ENCODE measurements at regions of chr6 and their contacts with region 1.

Region 1: DNA sequence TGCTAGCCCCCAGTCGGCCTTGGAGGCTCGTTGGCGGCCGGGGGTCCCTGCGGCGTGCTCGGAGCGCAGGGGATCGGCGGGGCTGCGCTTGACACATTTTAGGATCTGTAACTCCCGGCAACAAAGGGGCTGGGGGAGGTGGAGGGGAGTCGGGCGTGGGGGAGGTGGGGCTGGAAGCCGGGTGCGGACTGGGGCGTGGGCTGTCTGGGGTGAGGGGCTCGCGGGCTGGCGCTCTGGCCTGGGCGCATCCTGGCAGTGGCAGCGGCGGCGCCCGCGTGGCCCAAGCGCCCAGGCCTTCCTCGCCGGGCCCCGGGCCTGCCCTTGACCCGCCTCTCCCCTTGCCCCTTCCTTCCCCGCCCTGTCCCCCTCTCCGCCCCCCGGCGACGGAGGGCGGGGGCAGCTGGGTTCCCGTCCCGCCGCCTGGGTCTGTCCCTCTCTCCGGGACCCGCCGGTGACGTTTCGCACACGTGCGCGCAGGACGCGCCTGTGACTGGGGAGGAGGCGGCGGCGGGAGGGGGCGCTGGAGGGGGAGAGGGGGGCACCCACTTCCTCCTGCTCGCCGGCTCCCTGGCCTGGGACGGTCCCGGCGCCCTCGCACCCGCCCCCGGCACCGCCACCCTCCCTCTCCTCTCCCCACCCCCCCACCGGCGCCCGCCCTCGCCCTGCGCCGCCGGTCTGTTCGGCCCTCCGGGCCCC is 1.5 kb downstream of the E2F3 start:
- DNase-seq: peak; percentile 64 to 89
- H3K4me3 ChIP-seq: peak overlapping the region; percentile 62 to 88 (median 86)
- H3K27ac ChIP-seq: peak overlapping the region; percentile 93
- H3K4me1 ChIP-seq: peaks cover 0 to 5% (median 2%) of the 10 kb centered on the region in 4 experiments; a peak in 3 of 7 replicates
- H3K27me3 ChIP-seq: no peaks in the 10 kb centered on the region; a peak in 1 of 7 replicates
- CTCF ChIP-seq: no peak
- EP300 ChIP-seq: 0 out of 3 replicates have a peak, but pooled peaks of 1 of the 2 experiments have one; percentile 8
- POLR2A ChIP-seq: peak in 1 of 2 experiments; percentile 29; a peak in 1 of 3 replicates
- RAD21 ChIP-seq: no peak

Region 2: DNA sequence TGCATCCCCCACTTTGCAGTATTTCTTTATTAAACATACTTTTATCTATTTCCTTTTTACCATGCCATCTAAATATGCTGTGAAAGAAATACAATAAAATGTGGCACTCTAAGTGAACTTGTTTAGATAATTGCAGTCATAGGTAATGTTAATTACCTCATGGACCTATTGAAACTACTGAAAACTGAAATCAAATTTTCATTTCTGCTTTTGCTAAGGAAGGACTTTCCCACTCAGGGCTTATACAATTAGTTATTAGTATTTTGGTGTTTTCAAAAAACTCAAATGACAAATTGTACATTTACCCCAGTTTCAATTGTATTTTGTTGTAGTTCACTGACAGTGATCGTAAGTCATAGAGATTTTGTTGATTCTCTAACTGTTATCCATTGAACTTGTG is 477.7 kb before region 1 on chr6:
- CTCF ChIA-PET with region 1: no interaction called
- POLR2A ChIA-PET with region 1: no interaction called
- DNase-seq: no peak
- H3K4me3 ChIP-seq: no peak overlapping the region
- H3K27ac ChIP-seq: no peak overlapping the region
- H3K4me1 ChIP-seq: no peaks in the 10 kb centered on the region; a peak in 1 of 7 replicates
- H3K27me3 ChIP-seq: no peaks in the 10 kb centered on the region
- CTCF ChIP-seq: no peak
- EP300 ChIP-seq: no peak
- POLR2A ChIP-seq: no peak
- RAD21 ChIP-seq: no peak

Region 3: DNA sequence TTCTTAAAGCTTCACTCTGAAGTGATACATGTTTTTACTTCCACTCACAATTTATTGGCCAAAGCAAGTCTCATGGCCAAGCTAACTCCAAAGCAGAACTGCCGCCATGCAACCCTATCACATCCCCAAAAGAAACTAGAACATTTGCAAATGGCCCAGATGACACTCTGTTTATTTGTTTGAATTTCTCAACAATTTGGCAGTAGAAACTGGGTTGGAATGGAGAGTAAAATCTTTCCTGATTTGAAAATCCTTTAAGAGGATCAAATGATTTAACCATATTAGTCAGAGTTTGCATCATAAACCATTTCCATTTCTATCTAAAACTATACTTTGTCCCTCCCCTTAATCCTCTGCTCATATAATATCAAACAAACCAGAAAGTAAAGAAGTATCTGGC is 40.6 kb before region 1 on chr6:
- CTCF ChIA-PET with region 1: no interaction called
- POLR2A ChIA-PET with region 1: no interaction called
- DNase-seq: no peak
- H3K4me3 ChIP-seq: no peak overlapping the region
- H3K27ac ChIP-seq: no peak overlapping the region
- H3K4me1 ChIP-seq: no peaks in the 10 kb centered on the region
- H3K27me3 ChIP-seq: no peaks in the 10 kb centered on the region; a peak in 1 of 7 replicates
- CTCF ChIP-seq: no peak
- EP300 ChIP-seq: no peak
- POLR2A ChIP-seq: no peak
- RAD21 ChIP-seq: no peak

Region 4: GRCh38 chr6:20377623-20378265 is 25.5 kb before region 1 on chr6:
- CTCF ChIA-PET with region 1: interaction called, 9 read pairs
- POLR2A ChIA-PET with region 1: interaction called, 15 read pairs
- DNase-seq: no peak
- H3K4me3 ChIP-seq: no peak overlapping the region
- H3K27ac ChIP-seq: no peak overlapping the region
- H3K4me1 ChIP-seq: peaks cover 0 to 3% (median 0%) of the 10 kb centered on the region in 4 experiments; a peak in 1 of 7 replicates
- H3K27me3 ChIP-seq: peaks cover 0 to 2% (median 0%) of the 10 kb centered on the region in 4 experiments; a peak in 1 of 7 replicates
- CTCF ChIP-seq: no peak
- EP300 ChIP-seq: no peak
- POLR2A ChIP-seq: no peak
- RAD21 ChIP-seq: no peak

Region 5: GRCh38 chr6:20415712-20416454 is 12.7 kb after region 1 on chr6:
- CTCF ChIA-PET with region 1: interaction called, 8 read pairs
- POLR2A ChIA-PET with region 1: interaction called, 39 read pairs
- DNase-seq: peak in 1 of 2 experiments; percentile 37
- H3K4me3 ChIP-seq: no peak overlapping the region
- H3K27ac ChIP-seq: no peak overlapping the region
- H3K4me1 ChIP-seq: peaks cover 1 to 29% (median 4%) of the 10 kb centered on the region in 4 experiments; a peak in 6 of 7 replicates
- H3K27me3 ChIP-seq: no peaks in the 10 kb centered on the region
- CTCF ChIP-seq: no peak
- EP300 ChIP-seq: no peak
- POLR2A ChIP-seq: no peak
- RAD21 ChIP-seq: no peak

Region 6: DNA sequence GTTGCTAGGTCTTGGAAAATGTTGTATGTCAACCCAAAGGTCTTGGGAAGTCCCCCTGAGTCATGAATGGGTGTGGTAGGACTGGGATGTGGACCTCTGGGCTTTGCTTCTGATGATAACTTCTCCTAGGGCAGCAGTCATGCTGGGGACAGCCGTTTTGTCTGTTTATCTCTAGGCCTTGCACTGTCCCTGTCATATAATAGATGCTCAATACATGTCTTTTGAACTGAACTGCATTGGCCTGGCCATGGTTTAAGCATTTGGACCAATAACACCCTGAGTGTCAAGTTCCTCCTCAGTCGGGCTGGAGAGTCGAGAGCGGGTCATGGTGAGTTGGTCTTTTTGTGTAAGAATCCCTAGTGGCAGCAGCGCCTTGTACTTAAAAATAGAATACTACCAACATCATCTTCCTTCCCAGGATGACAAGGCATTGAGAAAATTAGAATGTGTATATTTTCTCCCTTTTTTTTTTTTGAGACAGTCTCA is 41.6 kb after region 1 on chr6:
- CTCF ChIA-PET with region 1: interaction called, 4 read pairs
- POLR2A ChIA-PET with region 1: interaction called, 10 read pairs
- DNase-seq: no peak
- H3K4me3 ChIP-seq: no peak overlapping the region
- H3K27ac ChIP-seq: no peak overlapping the region
- H3K4me1 ChIP-seq: peaks cover 0 to 9% (median 5%) of the 10 kb centered on the region in 4 experiments; a peak in 5 of 7 replicates
- H3K27me3 ChIP-seq: no peaks in the 10 kb centered on the region
- CTCF ChIP-seq: no peak
- EP300 ChIP-seq: no peak
- POLR2A ChIP-seq: no peak
- RAD21 ChIP-seq: no peak

Region 7: GRCh38 chr6:20467437-20467836 is 64.2 kb after region 1 on chr6:
- CTCF ChIA-PET with region 1: interaction called, 4 read pairs
- POLR2A ChIA-PET with region 1: interaction called, 27 read pairs
- DNase-seq: no peak
- H3K4me3 ChIP-seq: peak overlapping the region in 1 of 4 experiments; percentile 11; a peak in 1 of 8 replicates
- H3K27ac ChIP-seq: no peak overlapping the region
- H3K4me1 ChIP-seq: peaks cover 3 to 24% (median 17%) of the 10 kb centered on the region in 4 experiments; a peak in 5 of 7 replicates
- H3K27me3 ChIP-seq: no peaks in the 10 kb centered on the region
- CTCF ChIP-seq: no peak
- EP300 ChIP-seq: no peak
- POLR2A ChIP-seq: no peak
- RAD21 ChIP-seq: no peak

Region 8: DNA sequence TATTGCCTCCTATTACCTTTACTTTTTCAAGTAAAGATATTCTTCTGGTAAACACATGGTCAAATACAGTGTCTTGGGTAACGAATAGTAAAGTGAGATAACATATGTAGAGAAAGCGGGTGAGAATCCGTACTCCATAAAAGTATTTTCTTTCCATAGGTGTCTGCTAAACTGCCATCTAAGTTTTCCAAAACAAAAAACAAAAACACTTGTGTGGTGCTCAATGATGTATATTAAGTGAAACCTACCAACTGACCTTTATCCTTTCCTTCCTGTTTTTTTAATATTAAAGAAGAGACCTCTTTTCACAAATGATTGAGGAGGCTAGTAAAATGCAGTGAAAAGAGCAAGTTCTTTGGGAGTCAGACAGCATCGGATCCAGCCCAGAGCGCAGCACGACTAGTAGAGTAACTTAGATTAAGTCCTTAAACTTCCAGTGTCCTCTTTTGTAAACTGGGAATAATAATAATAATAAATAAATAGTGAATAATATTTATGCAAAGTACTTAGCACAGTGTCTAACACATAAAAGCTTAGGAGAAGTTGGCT is 130.6 kb after region 1 on chr6:
- CTCF ChIA-PET with region 1: interaction called, 13 read pairs
- POLR2A ChIA-PET with region 1: interaction called, 6 read pairs
- DNase-seq: peak in 1 of 2 experiments; percentile 22
- H3K4me3 ChIP-seq: peak overlapping the region; percentile 75 to 96 (median 90); a peak in 7 of 8 replicates
- H3K27ac ChIP-seq: peak overlapping the region; percentile 84; the same call in 1 of the 2 replicates
- H3K4me1 ChIP-seq: peaks cover 0 to 3% (median 0%) of the 10 kb centered on the region in 4 experiments; a peak in 1 of 7 replicates
- H3K27me3 ChIP-seq: no peaks in the 10 kb centered on the region
- CTCF ChIP-seq: no peak
- EP300 ChIP-seq: no peak
- POLR2A ChIP-seq: no peak
- RAD21 ChIP-seq: no peak

Measured in H1 (cell line).